ENCODE measurements at regions of chr1 and their contacts with region 1.

Region 1: GRCh38 chr1:117732065-117732797 is 126.4 kb downstream of the TENT5C start:
- DNase-seq: no peak
- H3K4me3 ChIP-seq: no peak overlapping the region
- H3K27ac ChIP-seq: no peak overlapping the region
- H3K4me1 ChIP-seq: peaks cover 16% of the 10 kb centered on the region
- H3K27me3 ChIP-seq: no peaks in the 10 kb centered on the region
- CTCF ChIP-seq: no peak
- POLR2A ChIP-seq: no peak

Region 2: GRCh38 chr1:117683571-117684285 is 48.5 kb before region 1 on chr1:
- intact Hi-C with region 1: loop called (anchors 2 kb)
- DNase-seq: peak in 1 of 2 donors; percentile 77
- H3K4me3 ChIP-seq: no peak overlapping the region
- H3K27ac ChIP-seq: no peak overlapping the region
- H3K4me1 ChIP-seq: no peaks in the 10 kb centered on the region
- H3K27me3 ChIP-seq: no peaks in the 10 kb centered on the region
- CTCF ChIP-seq: no peak
- POLR2A ChIP-seq: no peak

Region 3: DNA sequence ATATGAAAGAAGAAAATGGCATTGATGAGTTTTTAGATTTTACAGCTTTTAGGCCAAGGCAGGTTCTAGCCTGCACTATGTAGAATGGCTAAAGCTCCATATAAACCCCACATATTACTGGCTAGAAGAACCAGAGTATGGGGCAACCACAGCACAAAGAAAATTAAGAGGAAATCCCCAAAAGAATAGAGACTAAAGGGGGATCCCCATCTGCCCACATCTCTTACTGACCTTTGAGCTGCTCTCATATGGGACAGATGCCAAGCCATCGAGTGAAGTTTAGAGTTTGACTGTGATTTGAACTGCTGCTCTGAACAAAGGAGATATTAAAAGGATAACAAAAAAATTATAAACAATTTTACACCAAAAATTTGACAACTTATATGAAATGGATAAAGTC is 1534.2 kb after region 1 on chr1:
- intact Hi-C with region 1: no loop called
- DNase-seq: no peak
- H3K4me3 ChIP-seq: no peak overlapping the region
- H3K27ac ChIP-seq: no peak overlapping the region
- H3K4me1 ChIP-seq: no peaks in the 10 kb centered on the region
- H3K27me3 ChIP-seq: no peaks in the 10 kb centered on the region
- CTCF ChIP-seq: no peak
- POLR2A ChIP-seq: no peak

Measured in vagina (tissue), 2 donors.